Left lung (tissue), 14 donors: ENCODE measurements at regions of chr1 and their contacts with region 1.

Region 1: DNA sequence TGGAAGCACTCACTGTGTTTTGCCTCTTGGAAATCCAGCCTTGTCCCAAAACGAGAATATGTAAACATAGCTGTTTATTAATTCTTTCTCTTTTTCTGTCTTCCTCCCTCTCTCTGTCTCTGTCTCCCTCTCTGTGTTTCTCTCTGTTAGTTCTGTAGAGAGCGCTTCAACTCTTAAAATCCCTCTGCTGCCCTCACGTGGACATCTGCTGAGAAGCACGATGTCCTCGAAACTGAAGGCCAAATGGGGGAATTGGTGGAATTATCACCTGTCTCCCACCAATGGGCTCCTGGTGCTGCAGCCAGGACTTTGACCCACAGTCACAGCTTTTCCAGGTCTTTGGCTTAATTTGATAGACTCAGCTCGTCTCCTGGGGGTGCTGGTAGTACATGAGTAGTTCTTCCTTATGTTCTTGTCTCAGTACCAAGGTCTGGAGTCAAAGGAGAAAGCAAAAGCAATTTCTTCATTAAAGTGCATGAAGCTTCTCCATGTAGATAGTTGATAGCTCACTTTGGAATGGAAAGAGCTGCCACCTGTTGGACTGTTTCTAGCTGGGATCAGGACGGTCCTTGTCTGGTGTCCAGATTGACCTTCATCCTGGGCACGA is 5.5 kb upstream of the GBP6 start:
- DNase-seq: peak; percentile 37 to 81 (median 68)
- ATAC-seq: peak; percentile 92
- H3K4me3 ChIP-seq: no peak overlapping the region
- H3K27ac ChIP-seq: no peak overlapping the region
- H3K4me1 ChIP-seq: peaks cover 0 to 18% of the 10 kb centered on the region in 2 donors
- H3K27me3 ChIP-seq: no peaks in the 10 kb centered on the region
- CTCF ChIP-seq: peak; percentile 76 to 78

Region 2: DNA sequence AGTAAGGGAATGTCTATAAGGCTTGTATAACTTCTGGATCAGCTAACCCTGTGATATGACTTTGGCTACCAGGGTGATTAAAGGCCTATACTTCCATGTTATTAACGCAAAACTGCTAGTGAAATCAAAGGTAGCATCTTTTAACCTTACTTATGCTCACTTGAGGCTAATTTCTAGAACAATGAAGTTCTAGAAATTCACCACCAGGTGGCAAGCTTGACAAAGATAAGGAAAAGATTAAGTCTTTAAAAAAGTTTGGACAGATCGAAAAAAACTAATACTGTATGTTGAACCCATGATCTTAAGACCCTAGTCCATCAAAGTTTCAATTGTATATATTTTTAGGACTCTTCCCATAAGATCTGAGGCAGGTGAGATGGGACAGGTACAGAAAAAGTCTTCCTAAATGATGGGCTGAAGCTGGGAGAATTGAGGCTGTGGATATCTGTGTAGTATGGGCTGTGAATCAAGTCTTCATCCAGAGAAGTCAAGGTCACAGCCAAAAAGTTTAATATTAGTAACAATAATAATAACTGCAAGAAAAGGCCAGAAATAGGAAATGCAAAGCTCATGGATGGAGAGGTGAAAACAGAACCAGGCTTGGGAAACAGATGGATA is 384.8 kb before region 1 on chr1:
- intact Hi-C with region 1: loop called in 1 of 2 experiments (anchors 10 kb)
- DNase-seq: peak in 1 of 4 donors; percentile 21
- ATAC-seq: peak; percentile 44
- H3K4me3 ChIP-seq: no peak overlapping the region
- H3K27ac ChIP-seq: no peak overlapping the region
- H3K4me1 ChIP-seq: peaks cover 3% of the 10 kb centered on the region in 2 donors
- H3K27me3 ChIP-seq: no peaks in the 10 kb centered on the region
- CTCF ChIP-seq: peak; percentile 56 to 57

Region 3: DNA sequence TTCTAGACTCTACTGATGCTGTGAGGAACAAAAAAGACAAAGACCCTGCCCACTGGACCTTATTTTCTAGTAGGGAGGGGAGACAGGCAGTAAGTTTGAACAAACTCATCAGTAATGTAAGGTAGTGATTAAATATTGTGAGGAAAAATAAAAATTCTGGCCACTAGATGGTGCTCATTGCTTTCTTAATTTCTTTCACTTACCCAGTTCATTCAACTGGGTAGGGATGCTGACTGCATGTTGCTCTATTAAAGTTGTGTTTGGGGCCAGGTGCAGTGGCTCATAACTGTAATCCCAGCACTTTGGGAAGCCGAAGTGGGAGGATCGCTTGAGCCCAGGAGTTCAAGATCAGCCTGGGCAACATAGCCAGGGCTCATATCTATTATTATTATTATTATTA is 359.7 kb before region 1 on chr1:
- intact Hi-C with region 1: loop called in 1 of 2 experiments (anchors 2 kb)
- DNase-seq: peak in 2 of 4 donors; percentile 45 to 77
- ATAC-seq: peak; percentile 97
- H3K4me3 ChIP-seq: no peak overlapping the region
- H3K27ac ChIP-seq: no peak overlapping the region
- H3K4me1 ChIP-seq: peaks cover 0 to under 1% of the 10 kb centered on the region in 2 donors
- H3K27me3 ChIP-seq: no peaks in the 10 kb centered on the region
- CTCF ChIP-seq: peak; percentile 31 to 44

Region 4: DNA sequence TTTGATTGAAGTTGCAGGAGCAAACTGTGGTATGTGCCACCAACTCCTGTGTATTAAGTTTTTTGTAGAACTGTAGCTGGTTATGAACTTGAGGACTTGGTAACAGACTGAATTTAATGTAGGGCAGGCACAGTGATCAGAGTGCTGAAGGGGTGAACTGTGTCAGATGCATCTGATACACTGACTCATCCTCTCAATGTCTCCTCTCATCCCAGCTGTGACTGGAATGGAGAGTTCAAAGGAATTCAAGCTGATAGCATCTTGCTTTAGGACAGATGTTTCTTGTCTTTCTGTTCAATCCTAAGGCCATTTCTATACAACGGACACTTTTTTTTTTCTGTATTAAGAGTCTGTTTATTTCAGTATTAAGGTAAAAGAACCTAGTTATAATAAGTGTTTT is 268.4 kb before region 1 on chr1:
- intact Hi-C with region 1: loop called in 1 of 2 experiments (anchors 10 kb)
- DNase-seq: no peak
- ATAC-seq: no peak
- H3K4me3 ChIP-seq: no peak overlapping the region
- H3K27ac ChIP-seq: no peak overlapping the region
- H3K4me1 ChIP-seq: no peaks in the 10 kb centered on the region
- H3K27me3 ChIP-seq: no peaks in the 10 kb centered on the region
- CTCF ChIP-seq: no peak